ENCODE measurements at regions of chr12 and their contacts with region 1.

Region 1: DNA sequence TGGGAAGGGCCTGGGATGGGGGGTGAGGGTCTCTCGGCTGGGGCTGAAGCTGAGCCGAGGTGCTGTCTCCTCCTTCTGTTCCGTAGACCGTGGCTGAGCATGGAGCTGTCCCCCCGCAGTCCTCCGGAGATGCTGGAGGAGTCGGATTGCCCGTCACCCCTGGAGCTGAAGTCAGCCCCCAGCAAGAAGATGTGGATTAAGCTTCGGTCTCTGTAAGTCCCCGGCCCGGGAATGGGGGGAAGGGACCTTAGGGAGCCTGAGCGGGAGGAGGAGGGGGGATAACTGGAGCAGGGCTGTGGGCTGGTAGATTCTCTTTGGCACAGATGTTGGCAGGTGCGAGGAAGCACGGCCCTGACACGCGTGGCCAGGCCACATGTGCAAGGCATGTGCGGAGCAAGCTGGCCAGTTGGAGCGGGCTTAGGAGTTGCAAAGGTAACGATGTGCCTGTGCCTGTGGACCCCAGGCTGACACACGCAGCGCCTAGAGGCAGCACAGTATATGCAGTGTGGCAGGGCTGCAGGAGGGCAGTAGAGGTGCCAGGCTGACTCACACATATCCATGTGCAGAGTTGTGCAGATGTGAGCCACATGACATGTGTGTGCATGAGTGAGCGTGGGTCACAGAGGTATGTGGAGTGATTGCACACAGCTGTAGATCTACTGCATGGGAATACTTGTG is 512 bp downstream of the PDE1B start:
- DNase-seq: no peak
- ATAC-seq: peak; percentile 66; the same call in 1 of the 2 replicates
- H3K4me3 ChIP-seq: peak overlapping the region; percentile 22 to 45
- H3K27ac ChIP-seq: no peak overlapping the region
- H3K4me1 ChIP-seq: no peaks in the 10 kb centered on the region
- H3K27me3 ChIP-seq: peaks cover 45% of the 10 kb centered on the region
- CTCF ChIP-seq: no peak

Region 2: DNA sequence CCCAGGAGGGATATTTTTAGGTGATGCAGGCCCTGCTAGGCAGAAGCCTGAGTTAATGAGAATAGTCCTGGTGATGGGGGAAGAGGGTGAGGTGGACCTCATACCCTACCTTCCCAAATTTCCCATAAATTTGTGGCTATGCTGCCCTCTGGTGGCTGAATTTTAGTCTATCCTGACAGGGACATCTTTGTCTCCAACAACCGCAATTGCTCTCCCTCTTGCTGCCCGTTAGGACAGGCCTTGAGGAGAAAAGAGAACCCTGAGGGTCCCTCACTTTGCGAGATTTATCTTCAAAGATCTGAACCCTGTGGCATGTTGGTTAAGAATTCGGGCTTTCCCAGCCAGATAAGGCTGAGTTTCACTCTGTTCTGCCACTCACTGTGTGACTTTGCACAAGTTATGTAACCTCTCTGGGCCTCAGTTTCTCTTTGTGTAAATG is 155.6 kb before region 1 on chr12:
- CTCF ChIA-PET with region 1: no interaction called
- POLR2A ChIA-PET with region 1: no interaction called
- in situ Hi-C with region 1: no loop called
- intact Hi-C with region 1: no loop called
- DNase-seq: no peak
- ATAC-seq: peak; percentile 71
- H3K4me3 ChIP-seq: no peak overlapping the region
- H3K27ac ChIP-seq: no peak overlapping the region
- H3K4me1 ChIP-seq: no peaks in the 10 kb centered on the region; the same call in 1 of the 2 replicates
- H3K27me3 ChIP-seq: no peaks in the 10 kb centered on the region
- CTCF ChIP-seq: peak; percentile 87

Region 3: DNA sequence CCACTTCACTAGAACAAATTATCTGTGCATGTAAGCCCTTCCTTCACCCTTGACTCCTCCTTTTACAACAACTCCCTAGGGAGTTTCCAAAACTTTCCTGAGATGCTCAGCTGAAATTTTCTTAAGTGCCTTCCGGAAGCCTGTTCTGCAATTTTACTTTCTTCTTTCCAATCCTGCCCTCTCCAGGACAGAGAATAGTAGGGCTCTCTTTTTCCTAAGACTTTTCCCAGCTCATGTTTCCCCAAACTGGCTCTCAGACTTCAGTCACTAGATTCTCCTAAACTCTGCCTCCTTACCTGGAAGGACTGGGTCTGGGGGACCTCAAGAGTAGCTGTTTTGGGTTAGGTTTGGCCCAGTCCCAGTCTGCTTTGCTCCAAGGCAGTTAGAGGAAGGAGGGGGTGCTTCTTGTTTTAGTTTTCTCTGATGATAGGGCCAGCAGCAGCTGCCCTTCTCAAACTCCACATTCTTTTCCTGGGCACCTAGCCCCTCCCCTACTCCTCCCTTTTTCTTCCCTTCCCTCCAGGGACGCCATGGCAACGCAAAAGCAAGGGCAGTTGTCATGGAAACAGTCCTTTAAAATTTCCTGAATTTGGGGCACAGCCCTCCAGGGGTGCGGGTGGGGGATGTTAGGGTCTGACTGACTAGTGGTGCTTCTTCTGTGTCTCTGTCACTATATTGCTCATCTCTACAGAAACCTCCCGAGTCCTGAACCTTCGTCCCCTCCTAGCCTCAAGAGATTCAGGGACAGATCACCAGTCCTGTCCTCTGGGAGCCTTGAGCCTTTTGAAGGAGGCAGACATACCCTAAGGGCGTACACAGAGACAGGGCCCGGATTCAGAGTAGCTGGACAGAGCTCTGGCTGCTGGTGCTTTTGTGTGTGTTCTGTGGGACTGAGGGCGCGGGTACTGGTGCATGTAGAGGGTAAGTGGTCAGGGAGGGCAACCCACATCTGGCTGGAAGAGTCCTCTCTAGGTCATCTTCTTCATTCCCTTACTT is 21.6 kb after region 1 on chr12:
- CTCF ChIA-PET with region 1: no interaction called
- POLR2A ChIA-PET with region 1: no interaction called
- in situ Hi-C with region 1: no loop called
- intact Hi-C with region 1: no loop called
- DNase-seq: no peak
- ATAC-seq: no peak
- H3K4me3 ChIP-seq: no peak overlapping the region
- H3K27ac ChIP-seq: no peak overlapping the region
- H3K4me1 ChIP-seq: no peaks in the 10 kb centered on the region
- H3K27me3 ChIP-seq: peaks cover 8% of the 10 kb centered on the region
- CTCF ChIP-seq: no peak

Region 4: DNA sequence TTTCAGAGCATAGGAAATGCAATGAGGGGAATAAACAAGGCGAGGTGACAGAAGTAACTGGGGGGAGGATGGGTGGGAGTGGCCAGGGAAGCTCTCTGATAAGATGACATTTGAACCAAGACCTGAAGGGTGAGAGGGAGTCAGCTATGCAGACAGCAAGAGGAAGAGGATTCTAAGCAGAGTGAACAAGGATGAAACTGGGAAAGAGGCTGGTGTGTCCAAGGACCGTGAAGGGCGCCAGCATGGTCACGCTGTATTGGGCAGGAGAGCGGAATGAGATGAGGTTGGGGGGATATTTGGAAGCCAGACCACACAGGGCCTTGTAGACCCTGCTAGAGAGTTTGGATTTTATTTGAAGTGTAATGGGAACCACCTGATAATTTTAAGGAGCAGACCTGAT is 49.1 kb after region 1 on chr12:
- CTCF ChIA-PET with region 1: interaction called, 16 read pairs
- POLR2A ChIA-PET with region 1: no interaction called
- in situ Hi-C with region 1: no loop called
- intact Hi-C with region 1: no loop called
- DNase-seq: no peak
- ATAC-seq: no peak
- H3K4me3 ChIP-seq: no peak overlapping the region
- H3K27ac ChIP-seq: no peak overlapping the region
- H3K4me1 ChIP-seq: no peaks in the 10 kb centered on the region
- H3K27me3 ChIP-seq: peaks cover 10% of the 10 kb centered on the region; the same call in 1 of the 2 replicates
- CTCF ChIP-seq: no peak

Region 5: GRCh38 chr12:54870604-54871003 is 320.7 kb after region 1 on chr12:
- CTCF ChIA-PET with region 1: no interaction called
- POLR2A ChIA-PET with region 1: no interaction called
- in situ Hi-C with region 1: no loop called
- intact Hi-C with region 1: no loop called
- DNase-seq: no peak
- ATAC-seq: no peak
- H3K4me3 ChIP-seq: no peak overlapping the region
- H3K27ac ChIP-seq: no peak overlapping the region
- H3K4me1 ChIP-seq: no peaks in the 10 kb centered on the region
- H3K27me3 ChIP-seq: peaks cover 5% of the 10 kb centered on the region; the same call in 1 of the 2 replicates
- CTCF ChIP-seq: no peak

Region 6: GRCh38 chr12:54891717-54892554 is 342.0 kb after region 1 on chr12:
- CTCF ChIA-PET with region 1: no interaction called
- POLR2A ChIA-PET with region 1: no interaction called
- in situ Hi-C with region 1: no loop called
- intact Hi-C with region 1: no loop called
- DNase-seq: peak; percentile 27
- ATAC-seq: peak; percentile 65
- H3K4me3 ChIP-seq: no peak overlapping the region
- H3K27ac ChIP-seq: no peak overlapping the region
- H3K4me1 ChIP-seq: no peaks in the 10 kb centered on the region
- H3K27me3 ChIP-seq: peaks cover 5% of the 10 kb centered on the region
- CTCF ChIP-seq: no peak

Measured in Panc1 (cell line).